ENCODE measurements at regions of chr15 and their contacts with region 1.

Region 1: DNA sequence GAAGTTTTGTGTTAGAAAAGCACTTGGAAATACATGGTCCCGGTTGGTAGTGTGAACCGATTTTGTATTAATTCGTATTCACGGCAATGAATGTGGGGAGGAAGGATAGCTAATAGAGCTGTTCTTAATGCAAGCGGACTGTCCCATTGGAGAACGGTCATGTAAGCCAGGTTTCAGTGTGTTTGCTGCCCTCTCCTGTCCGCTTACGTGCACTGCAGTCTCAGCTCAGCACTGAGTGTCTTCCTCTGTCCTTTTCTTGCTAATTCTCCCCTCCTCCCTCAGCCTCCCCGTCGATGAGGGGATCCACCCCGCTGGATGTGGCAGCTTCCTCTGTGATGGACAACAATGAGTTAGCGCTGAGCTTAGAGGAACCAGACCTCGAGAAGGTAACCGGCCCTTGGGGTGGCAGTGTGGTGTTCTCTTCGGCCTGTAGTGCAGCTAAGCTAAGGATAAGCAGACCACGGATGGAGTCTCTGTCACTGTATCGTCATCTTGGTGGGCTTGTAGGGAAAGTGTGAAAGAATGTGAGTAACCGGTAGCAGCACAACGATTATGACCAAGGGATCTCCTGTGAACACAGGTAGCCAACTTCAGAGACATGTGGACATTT is 267.5 kb upstream of the CHRM5 start:
- DNase-seq: peak in 4 of 5 donors; percentile 50 to 65 (median 54)
- ATAC-seq: peak; percentile 83 to 95 (median 88)
- H3K4me3 ChIP-seq: no peak overlapping the region
- H3K27ac ChIP-seq: no peak overlapping the region
- H3K4me1 ChIP-seq: peaks cover 0 to 7% (median 0%) of the 10 kb centered on the region in 12 donors
- H3K27me3 ChIP-seq: peaks cover 0 to 13% (median 0%) of the 10 kb centered on the region in 9 donors
- CTCF ChIP-seq: peak; percentile 75 to 91 (median 86)
- POLR2A ChIP-seq: no peak

Region 2: DNA sequence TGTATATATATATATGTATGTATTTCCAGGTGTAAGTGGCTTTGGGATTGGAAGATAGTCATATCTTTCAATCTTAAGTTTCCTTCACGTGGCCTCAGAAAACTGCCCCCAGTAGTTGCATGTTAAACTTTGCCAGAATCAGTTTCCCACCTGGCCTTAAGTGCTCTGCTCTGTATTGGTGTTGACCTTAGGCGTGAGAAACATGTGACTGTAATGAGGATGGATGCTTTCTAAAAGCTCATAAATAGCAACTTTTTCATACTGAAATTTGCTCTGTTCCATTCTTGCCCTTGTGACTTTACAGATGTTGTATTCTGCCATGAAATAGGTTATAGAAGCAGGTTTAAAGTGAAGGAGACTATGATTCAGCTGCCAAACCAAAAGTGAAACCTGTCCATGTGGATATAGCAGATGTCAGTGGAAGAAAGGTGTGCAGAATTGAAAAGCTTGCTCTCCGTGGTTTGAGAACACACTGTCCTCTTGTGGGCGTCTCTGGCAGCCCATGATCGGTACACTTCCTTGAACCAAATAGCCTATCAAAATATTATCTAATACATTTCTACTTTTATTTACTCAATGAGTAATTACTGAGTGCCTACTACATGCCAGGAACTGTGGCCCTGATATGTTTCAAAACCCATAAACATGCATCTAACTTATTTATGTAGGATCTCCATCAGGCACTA is 1043.5 kb before region 1 on chr15:
- intact Hi-C with region 1: loop called in 1 of 10 experiments (anchors 5 kb)
- DNase-seq: no peak
- ATAC-seq: no peak
- H3K4me3 ChIP-seq: no peak overlapping the region
- H3K27ac ChIP-seq: no peak overlapping the region
- H3K4me1 ChIP-seq: peaks cover 0 to 3% (median 0%) of the 10 kb centered on the region in 12 donors
- H3K27me3 ChIP-seq: no peaks in the 10 kb centered on the region
- CTCF ChIP-seq: no peak
- POLR2A ChIP-seq: no peak

Region 3: DNA sequence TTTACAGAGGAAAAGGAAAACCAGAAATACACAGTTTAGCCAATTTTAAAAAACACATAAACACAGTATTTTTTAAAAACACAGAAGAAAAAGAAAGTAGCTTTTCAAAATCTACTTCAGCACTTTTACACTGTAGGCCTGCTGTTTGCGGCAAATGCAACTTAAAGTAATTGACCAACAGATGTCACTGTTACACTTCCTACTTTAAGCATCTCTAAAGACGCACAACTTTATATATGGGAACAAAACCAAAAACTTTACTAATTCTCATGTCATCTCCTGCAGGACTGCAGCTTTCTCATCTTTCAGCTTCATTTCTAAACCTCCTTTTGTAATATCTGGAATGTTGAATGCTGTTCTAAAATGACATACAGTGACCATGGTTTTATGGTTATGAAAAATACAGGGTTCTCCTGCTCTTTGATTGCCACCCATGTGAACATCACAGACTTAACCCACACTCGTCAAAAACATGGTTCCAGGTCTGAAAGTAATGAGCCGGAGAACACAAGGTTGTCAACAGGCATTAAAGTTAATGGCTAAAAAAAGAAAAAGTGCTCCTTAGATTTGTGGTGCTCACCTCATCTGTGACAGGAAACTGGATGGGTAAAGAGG is 614.2 kb before region 1 on chr15:
- intact Hi-C with region 1: loop called in 8 of 10 experiments (anchors 2 to 10 kb)
- DNase-seq: no peak
- ATAC-seq: peak in 2 of 4 donors; percentile 63 to 75
- H3K4me3 ChIP-seq: no peak overlapping the region
- H3K27ac ChIP-seq: no peak overlapping the region
- H3K4me1 ChIP-seq: peaks cover 0 to 15% (median 0%) of the 10 kb centered on the region in 12 donors
- H3K27me3 ChIP-seq: no peaks in the 10 kb centered on the region
- CTCF ChIP-seq: peak; percentile 32 to 70 (median 52)
- POLR2A ChIP-seq: no peak

Region 4: DNA sequence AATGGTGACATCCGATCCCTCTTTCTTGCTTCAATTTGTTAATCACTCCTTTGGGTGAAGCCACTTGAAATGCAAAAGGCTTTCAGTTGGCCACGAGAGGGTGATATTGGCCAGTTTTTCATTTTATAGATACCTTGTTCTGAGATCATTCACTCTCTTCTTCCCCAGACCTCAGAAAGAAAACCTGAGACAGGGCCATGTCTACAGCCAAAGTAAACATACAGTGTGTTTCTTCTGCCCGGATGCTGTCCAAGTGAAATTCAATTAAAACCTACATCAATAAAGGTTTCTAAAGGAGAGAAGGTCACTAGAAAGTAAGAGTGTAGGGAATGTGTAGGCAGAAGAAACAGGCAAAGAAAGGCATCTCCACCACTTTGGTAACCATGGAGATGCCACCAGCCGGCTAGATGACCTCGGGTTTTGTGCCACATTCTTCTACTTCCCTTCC is 466.8 kb before region 1 on chr15:
- intact Hi-C with region 1: loop called in 8 of 10 experiments (anchors 5 to 10 kb)
- DNase-seq: no peak
- ATAC-seq: peak in 1 of 4 donors; percentile 42
- H3K4me3 ChIP-seq: no peak overlapping the region
- H3K27ac ChIP-seq: no peak overlapping the region
- H3K4me1 ChIP-seq: no peaks in the 10 kb centered on the region
- H3K27me3 ChIP-seq: peaks cover 0 to 28% (median 6%) of the 10 kb centered on the region in 9 donors
- CTCF ChIP-seq: peak in 9 of 12 donors; percentile 11 to 46 (median 38)
- POLR2A ChIP-seq: no peak

Region 5: GRCh38 chr15:33292717-33293307 is 408.0 kb before region 1 on chr15:
- intact Hi-C with region 1: loop called (anchors 1 to 5 kb)
- DNase-seq: peak in 4 of 5 donors; percentile 19 to 57 (median 32)
- ATAC-seq: peak in 3 of 4 donors; percentile 66 to 81 (median 68)
- H3K4me3 ChIP-seq: no peak overlapping the region
- H3K27ac ChIP-seq: no peak overlapping the region
- H3K4me1 ChIP-seq: peaks cover 0 to 6% (median 0%) of the 10 kb centered on the region in 12 donors
- H3K27me3 ChIP-seq: peaks cover 0 to 6% (median 0%) of the 10 kb centered on the region in 9 donors
- CTCF ChIP-seq: peak; percentile 43 to 75 (median 60)
- POLR2A ChIP-seq: no peak

Region 6: DNA sequence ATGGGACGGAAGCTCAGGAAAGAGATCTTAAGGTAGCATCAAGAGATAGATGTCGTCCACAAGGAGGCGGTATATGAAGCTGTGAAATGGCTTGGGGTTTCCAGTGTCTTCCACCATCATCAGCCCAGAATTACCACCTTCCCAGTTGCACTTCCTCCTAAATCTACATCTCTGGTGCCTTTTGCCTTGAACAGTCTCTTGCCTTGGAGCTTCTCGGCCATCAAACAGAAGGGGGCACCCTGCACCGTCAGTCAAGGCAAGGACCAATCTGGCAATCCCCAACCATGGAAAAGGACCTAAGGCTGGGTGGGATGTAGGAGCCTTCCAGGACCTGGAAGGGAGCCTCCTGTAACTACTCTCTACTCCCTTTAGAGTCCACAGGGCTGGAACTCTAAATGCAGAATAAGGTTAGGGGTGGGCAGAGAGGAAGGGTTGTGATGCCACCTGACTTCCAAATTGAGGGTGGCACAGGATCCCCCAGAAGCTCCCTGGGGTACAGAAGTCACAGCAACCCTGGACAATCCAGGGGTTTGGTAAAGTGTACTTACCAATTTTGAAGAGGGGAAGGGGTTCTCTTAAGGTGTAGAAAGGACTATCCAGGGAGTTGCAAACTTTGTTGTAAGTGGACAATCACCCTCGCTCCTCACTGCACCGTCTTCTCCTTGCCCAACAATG is 391.1 kb before region 1 on chr15:
- intact Hi-C with region 1: loop called in 1 of 10 experiments (anchors 5 kb)
- DNase-seq: peak in 2 of 5 donors; percentile 22 to 24
- ATAC-seq: peak in 3 of 4 donors; percentile 59 to 61 (median 61)
- H3K4me3 ChIP-seq: no peak overlapping the region
- H3K27ac ChIP-seq: no peak overlapping the region
- H3K4me1 ChIP-seq: peaks cover 0 to 8% (median 0%) of the 10 kb centered on the region in 12 donors
- H3K27me3 ChIP-seq: peaks cover 0 to 56% (median 19%) of the 10 kb centered on the region in 9 donors
- CTCF ChIP-seq: peak in 5 of 12 donors; percentile 17 to 47 (median 37)
- POLR2A ChIP-seq: no peak

Measured in heart left ventricle (tissue), 16 donors.